Cardiac septum (tissue), 1 donor: ENCODE measurements at regions of chr14 and their contacts with region 1.

Region 1: GRCh38 chr14:20827326-20827725 is 24.7 kb upstream of the RNASE1 start:
- DNase-seq: no peak

Region 2: GRCh38 chr14:20789230-20789813 is 38.0 kb before region 1 on chr14:
- intact Hi-C with region 1: no loop called
- DNase-seq: no peak

Region 3: DNA sequence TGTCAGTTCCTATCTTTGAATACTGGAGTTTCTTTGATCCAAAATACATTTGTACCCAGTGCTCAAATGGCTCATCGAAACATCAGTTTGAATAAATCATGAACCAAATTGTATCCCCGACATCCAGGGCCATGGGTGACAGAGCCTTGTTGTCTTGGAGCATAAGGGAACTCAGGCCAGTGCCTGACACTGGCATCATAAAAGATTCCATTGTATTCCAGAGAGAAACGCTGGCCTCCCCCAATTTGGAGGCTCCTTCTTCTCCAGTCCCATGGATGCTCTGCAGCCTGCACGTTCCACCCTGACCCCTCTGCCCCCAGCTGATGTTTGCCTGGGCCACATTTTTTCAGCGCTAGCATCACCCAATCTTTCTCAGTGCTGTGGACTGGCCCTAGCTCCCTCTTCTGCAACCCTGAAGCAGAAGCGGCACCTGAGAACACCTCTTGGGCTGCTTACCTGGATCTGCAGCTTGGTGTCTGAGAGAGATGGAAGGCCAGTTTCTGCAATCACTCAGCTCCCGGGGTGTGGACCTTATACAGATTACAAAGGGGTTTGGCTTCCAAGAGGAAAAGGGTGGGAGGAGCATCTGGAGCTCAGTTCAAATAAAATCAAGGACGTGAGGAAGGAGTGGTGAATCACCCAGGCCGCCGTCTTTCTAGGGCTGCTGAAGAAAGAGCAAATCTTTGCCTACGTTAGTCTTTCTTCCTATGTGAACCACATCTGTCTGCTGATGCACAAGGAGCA is 24.8 kb before region 1 on chr14 and contains the start of gene RNASE1:
- intact Hi-C with region 1: loop called (anchors 2 kb)
- DNase-seq: no peak
- total RNA-seq, gene RNASE1: 171 TPM